ENCODE measurements at regions of chr6 and their contacts with region 1.

Region 1: GRCh38 chr6:122471107-122472021 is at the start of gene SERINC1:
- DNase-seq: peak; percentile 85 to 97
- H3K4me3 ChIP-seq: peak within 1 kb of the TSS; percentile 69 to 91
- H3K27ac ChIP-seq: peak within 1 kb of the TSS; percentile 89 to 99
- H3K4me1 ChIP-seq: peaks cover 0 to 9% of the 10 kb centered on the region in 2 donors
- H3K27me3 ChIP-seq: no peaks in the 10 kb centered on the region
- CTCF ChIP-seq: no peak
- total RNA-seq, gene SERINC1: 72.6 TPM

Region 2: DNA sequence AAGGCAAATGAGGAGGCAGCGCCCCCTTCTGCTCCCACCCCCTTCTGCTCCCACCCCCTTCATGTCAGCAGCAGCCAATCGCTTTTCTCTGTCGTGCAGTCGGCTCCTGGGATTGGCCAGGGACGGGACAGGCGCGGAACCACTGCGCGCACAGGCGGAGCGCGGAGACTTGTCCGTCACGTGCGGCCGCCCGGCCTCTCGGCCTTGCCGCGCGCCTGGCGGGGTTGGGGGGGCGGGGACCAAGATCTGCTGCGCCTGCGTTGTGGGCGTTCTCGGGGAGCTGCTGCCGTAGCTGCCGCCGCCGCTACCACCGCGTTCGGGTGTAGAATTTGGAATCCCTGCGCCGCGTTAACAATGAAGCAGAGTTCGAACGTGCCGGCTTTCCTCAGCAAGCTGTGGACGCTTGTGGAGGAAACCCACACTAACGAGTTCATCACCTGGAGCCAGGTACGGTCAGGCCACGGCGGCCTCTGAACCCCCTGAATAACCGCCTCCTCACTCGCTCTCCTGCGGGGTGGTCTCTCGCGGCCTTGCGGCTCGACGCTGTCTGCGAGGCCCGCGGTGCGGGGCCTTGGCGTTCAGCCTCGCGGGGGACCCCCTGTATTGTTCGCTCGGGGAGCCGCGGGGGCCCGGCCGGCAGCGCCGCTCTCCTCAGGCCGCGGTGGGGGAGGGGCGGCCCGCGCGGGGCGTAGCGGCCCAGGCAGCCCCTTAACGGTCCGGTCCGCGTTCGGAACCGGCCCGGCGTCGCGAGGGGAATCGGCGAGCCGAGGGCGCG is 71.8 kb before region 1 on chr6 and contains the start of gene HSF2:
- intact Hi-C with region 1: loop called (anchors 1 kb)
- DNase-seq: peak; percentile 92 to 98
- H3K4me3 ChIP-seq: peak within 1 kb of the TSS; percentile 84 to 99
- H3K27ac ChIP-seq: peak within 1 kb of the TSS; percentile 77
- H3K4me1 ChIP-seq: peaks cover 0 to 2% of the 10 kb centered on the region in 2 donors
- H3K27me3 ChIP-seq: no peaks in the 10 kb centered on the region
- CTCF ChIP-seq: peak in 2 of 3 experiments; percentile 29 to 41
- total RNA-seq, gene HSF2: 26.1 TPM

Measured in ascending aorta (tissue), 2 donors.